ENCODE measurements at regions of chr17 and their contacts with region 1.

Region 1: DNA sequence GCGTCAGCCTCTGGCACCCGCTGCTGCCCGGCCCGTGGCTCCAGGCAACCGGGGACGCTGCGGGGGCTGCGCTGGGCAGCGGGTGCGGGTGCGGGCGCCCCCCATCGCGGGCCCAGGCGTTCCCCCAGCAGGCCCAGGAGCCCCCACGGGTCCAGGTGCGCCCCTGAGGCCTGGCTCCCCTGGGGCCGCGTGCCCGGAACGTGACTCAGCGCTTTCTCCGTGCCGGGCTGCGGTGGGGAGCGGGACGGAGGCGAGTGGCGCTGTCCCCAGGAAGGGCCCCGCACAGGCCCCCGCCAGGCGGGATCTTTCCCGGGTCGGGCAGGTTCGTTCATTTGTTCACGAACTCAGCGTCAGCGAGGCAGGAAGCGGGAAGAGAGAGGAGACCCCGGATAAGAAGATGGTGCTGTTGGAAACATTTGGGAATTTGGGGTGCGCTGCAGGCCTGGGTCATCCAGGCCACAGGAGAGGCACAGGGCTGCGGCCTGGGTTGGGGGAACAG is 18.4 kb upstream of the EXOC7 start:
- DNase-seq: no peak
- ATAC-seq: peak; percentile 8
- H3K4me3 Mint-ChIP-seq: no peak overlapping the region
- H3K27ac Mint-ChIP-seq: peak overlapping the region; percentile 77
- H3K4me1 Mint-ChIP-seq: peaks cover 14% of the 10 kb centered on the region
- H3K27me3 Mint-ChIP-seq: no peaks in the 10 kb centered on the region

Region 2: DNA sequence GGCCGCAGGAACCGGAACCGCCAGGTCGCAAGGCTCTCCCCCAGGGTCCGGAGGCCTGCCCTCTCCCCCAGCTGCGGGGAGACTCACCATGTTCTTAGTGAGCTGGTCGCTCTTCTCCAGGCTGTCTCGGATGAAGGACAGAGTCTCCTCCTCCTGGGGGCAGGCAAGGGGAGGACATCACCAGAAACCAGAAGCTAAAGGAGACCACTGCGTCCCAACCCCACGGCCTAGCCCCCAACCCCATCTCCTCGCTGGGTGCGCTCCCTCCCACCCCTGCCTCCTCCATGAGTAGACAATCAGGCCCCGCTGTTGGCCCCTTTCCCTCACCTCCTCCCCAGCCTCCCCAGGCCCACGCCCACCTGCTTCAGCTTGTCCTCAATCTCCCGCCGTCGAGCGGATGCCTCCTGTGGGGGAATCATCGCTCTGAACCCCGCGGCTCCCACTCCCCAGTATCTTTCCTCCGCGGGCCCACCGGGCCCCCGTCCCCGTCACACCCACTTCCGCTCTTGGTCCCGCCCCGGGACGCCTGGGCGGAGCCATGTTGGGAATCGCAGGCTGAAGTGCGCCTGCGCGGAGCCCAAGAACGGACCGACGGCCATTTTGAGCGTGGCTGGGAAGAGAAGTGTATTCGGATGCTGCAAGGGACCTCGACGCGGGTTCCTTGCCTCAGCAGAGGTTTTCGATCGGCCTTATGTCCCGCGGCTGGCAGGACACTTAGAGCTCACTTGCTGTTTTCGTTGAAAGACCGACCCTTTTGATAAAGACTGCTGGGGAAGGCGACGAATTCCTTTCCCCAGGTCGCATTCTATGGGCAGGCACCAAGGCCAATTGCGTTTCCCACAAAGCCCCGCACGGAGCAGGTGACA is 18.5 kb before region 1 on chr17 and contains the start of gene EXOC7:
- CTCF ChIA-PET with region 1: interaction called, 10 read pairs
- DNase-seq: peak; percentile 94
- ATAC-seq: peak; percentile 94
- H3K4me3 Mint-ChIP-seq: peak within 1 kb of the TSS; percentile 98
- H3K27ac Mint-ChIP-seq: peak within 1 kb of the TSS; percentile 97
- H3K4me1 Mint-ChIP-seq: peaks cover 16% of the 10 kb centered on the region
- H3K27me3 Mint-ChIP-seq: no peaks in the 10 kb centered on the region
- total RNA-seq, gene EXOC7: 132 to 137 TPM

Region 3: GRCh38 chr17:76141212-76142038 is 19.4 kb after region 1 on chr17 and contains the start of gene FOXJ1:
- CTCF ChIA-PET with region 1: interaction called, 12 read pairs
- DNase-seq: peak; percentile 94
- ATAC-seq: peak; percentile 73
- H3K4me3 Mint-ChIP-seq: peak within 1 kb of the TSS; percentile 67
- H3K27ac Mint-ChIP-seq: no peak within 1 kb of the TSS
- H3K4me1 Mint-ChIP-seq: peaks cover 56% of the 10 kb centered on the region
- H3K27me3 Mint-ChIP-seq: peaks cover 14% of the 10 kb centered on the region
- total RNA-seq, gene FOXJ1: 0.55 TPM in 1 of 2 experiments, not detected in the other

Region 4: GRCh38 chr17:76153640-76154039 is 31.7 kb after region 1 on chr17:
- CTCF ChIA-PET with region 1: interaction called, 13 read pairs
- DNase-seq: no peak
- ATAC-seq: peak; percentile 20
- H3K4me3 Mint-ChIP-seq: no peak overlapping the region
- H3K27ac Mint-ChIP-seq: no peak overlapping the region
- H3K4me1 Mint-ChIP-seq: peaks cover 13% of the 10 kb centered on the region
- H3K27me3 Mint-ChIP-seq: no peaks in the 10 kb centered on the region

Region 5: DNA sequence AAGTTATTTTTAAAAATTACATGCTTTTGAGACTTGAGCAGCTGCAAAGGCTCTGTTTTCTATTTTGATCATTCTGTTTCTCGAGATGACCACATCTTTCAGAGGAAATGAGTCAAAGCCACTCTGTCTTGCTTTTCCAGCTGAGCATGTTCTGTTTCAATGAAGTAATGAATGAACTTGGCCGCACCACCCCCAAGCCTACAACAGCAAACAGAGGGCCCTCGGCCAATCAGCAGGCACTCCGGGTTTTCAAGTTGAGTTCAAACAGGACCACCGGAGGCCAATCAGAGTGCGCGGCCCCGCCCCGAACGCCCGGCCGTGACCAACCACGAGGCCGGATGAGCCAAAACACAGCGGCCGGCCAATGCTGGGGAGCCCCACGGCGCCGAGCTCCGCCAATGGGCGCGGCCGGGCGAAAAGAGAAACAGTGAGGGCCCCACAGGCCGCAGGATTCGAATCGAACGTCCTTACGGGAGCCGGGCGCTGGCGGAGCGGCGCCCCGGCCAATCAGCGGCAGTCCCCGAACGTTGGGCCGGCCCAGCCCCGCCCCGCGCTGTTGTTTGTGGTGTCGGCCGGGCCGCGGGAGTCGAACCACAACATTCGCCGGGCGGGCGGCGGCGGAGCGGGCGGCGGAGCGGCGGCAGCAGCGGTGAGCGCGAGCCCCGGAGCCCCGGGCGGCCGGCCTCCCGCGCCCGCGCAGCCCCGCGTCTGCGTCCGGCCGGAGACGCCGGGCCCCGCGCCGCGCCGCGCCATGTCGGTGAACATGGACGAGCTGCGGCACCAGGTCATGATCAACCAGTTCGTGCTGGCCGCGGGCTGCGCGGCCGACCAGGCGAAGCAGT is 143.0 kb after region 1 on chr17 and contains the start of gene UBALD2:
- CTCF ChIA-PET with region 1: interaction called, 18 read pairs
- DNase-seq: peak; percentile 100
- ATAC-seq: peak; percentile 82
- H3K4me3 Mint-ChIP-seq: peak within 1 kb of the TSS; percentile 92
- H3K27ac Mint-ChIP-seq: peak within 1 kb of the TSS; percentile 99
- H3K4me1 Mint-ChIP-seq: peaks cover 54% of the 10 kb centered on the region
- H3K27me3 Mint-ChIP-seq: no peaks in the 10 kb centered on the region
- total RNA-seq, gene UBALD2: 260 to 406 TPM

Region 6: DNA sequence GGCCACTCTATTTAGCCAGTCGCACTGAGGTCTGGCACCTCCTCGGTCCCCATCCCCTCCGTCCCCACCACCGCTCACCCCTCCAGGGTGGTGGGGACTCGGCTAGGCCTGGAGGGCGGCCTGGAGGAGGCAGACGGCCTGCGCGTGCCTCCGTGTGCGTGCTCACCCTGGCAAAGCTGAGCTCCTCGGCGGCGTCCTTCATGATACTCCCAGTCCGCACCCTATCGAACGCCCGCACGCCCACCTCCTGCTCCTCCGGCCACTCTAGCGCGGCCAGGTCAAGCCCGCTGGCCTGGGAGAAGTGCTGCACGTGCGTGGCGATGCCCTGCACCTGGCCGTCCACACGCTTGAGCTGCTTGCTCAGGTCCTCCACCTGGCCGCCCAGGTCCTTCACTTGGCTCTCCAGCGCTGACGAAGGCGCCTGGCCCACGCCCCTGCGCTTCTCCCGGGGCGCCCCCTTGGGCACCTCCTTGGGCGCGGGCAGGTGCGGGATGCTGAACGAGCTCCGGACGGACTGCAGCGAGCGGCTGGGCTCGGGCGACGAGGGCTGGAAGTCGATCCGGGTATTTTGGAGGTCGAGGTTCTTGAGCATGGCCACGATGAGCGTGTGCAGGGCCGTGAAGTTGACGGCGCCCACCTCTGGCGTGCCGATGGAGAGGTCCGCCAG is 185.5 kb after region 1 on chr17:
- CTCF ChIA-PET with region 1: interaction called, 38 read pairs
- DNase-seq: no peak
- ATAC-seq: no peak
- H3K4me3 Mint-ChIP-seq: no peak overlapping the region
- H3K27ac Mint-ChIP-seq: no peak overlapping the region
- H3K4me1 Mint-ChIP-seq: peaks cover 2% of the 10 kb centered on the region
- H3K27me3 Mint-ChIP-seq: no peaks in the 10 kb centered on the region

Measured in activated CD8-positive, alpha-beta memory T cell treated with anti-CD3 and anti-CD28 coated beads, Interleukin-2, amount 10 ng/mL, durations not matched to agents 7 days and 5 days (primary cell).